ENCODE measurements at regions of chr1 and their contacts with region 1.

Region 1: DNA sequence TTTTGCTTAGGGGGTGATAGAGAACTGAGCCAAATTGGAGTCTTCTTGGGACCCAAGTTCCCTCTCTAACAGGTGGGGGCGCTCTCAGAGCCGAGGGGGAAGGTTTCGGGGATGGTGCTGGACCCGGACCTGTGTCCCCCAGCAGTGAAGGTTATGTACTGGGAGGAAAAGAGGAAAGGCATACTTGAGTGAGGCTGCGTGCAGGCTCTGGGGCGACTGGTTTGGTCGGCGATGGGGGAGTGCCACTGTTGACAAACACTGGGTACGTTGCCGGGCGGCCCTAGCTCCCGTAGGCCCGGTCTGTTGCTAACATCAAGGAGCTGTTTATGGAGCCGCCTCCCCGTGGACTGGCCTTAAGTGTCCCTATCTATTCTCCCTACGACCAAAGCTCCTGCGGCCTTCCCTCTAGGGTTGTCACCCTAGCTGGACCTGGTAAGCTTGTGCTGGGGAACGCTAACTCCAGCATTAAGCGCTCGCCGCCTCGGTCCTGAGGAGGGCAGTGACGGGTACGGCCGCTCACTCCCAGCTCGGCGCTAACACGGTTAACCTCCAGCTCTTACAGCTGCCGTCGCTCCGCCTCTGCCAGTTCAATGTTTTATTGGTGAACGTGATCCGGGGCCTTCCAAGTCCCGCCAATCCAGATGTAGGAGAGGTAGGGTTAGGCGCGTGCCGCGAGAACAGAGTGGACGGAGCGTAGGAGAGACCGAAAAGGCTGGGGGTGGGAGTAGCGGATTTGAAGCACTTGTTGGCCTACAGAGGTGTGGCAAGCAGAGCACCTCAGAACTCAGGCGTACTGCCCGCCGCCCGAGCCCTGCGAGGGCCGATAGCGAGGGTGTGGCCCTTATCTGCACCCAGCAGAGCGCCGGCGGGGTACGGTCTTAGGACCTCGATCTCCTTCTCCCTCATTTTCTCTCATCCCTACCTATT is at the start of gene PPOX:
- DNase-seq: peak; percentile 76 to 97 (median 92)
- ATAC-seq: peak; percentile 90 to 92
- H3K4me3 Mint-ChIP-seq: peak within 1 kb of the TSS; percentile 86 to 97 (median 92)
- H3K27ac Mint-ChIP-seq: peak within 1 kb of the TSS; percentile 97 to 100 (median 98)
- H3K4me1 Mint-ChIP-seq: peaks cover 29 to 66% (median 63%) of the 10 kb centered on the region in 4 donors
- H3K27me3 Mint-ChIP-seq: no peaks in the 10 kb centered on the region
- polyA plus RNA-seq, gene PPOX: 12.0 to 17.8 (median 15.7) TPM

Region 2: DNA sequence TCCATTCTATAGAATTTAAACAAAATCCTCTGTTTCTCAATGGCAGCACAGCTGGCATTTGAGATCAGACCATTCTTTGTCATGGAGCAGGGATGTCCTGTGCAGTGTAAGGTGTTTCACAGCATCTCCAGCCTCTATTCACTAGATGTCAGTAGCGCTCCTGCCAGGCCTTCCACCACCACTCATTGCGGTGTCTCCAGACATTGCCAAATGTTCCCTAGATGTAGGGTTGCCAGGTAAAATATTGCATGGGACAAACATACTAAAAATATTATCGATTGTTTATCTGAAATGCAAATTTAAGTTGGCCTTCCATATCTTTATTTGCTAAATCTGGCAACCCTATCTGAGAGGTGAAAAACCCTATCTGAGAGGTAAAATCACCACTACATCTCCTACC is 223.1 kb before region 1 on chr1:
- POLR2A ChIA-PET with region 1: no interaction called
- DNase-seq: no peak
- ATAC-seq: no peak
- H3K4me3 Mint-ChIP-seq: no peak overlapping the region
- H3K27ac Mint-ChIP-seq: no peak overlapping the region
- H3K4me1 Mint-ChIP-seq: no peaks in the 10 kb centered on the region
- H3K27me3 Mint-ChIP-seq: peaks cover 0 to 1% (median 0%) of the 10 kb centered on the region in 5 donors

Region 3: GRCh38 chr1:161153679-161154426 is 12.2 kb before region 1 on chr1 and contains the start of gene UFC1:
- POLR2A ChIA-PET with region 1: interaction called, 73 read pairs
- DNase-seq: peak; percentile 65 to 93 (median 84)
- ATAC-seq: peak; percentile 91 to 94
- H3K4me3 Mint-ChIP-seq: peak within 1 kb of the TSS; percentile 91 to 100 (median 98)
- H3K27ac Mint-ChIP-seq: peak within 1 kb of the TSS; percentile 99 to 100 (median 100)
- H3K4me1 Mint-ChIP-seq: peaks cover 15 to 39% (median 31%) of the 10 kb centered on the region in 4 donors
- H3K27me3 Mint-ChIP-seq: peaks cover 0 to 1% (median 0%) of the 10 kb centered on the region in 5 donors
- polyA plus RNA-seq, gene UFC1: 148 to 158 (median 155) TPM

Region 4: GRCh38 chr1:161177112-161177935 is 11.3 kb after region 1 on chr1 and contains the start of gene B4GALT3:
- POLR2A ChIA-PET with region 1: interaction called, 154 read pairs
- DNase-seq: peak; percentile 85 to 98 (median 93)
- ATAC-seq: peak; percentile 87 to 92
- H3K4me3 Mint-ChIP-seq: peak within 1 kb of the TSS; percentile 93 to 100 (median 99)
- H3K27ac Mint-ChIP-seq: peak within 1 kb of the TSS; percentile 97 to 100 (median 98)
- H3K4me1 Mint-ChIP-seq: peaks cover 40 to 89% (median 78%) of the 10 kb centered on the region in 4 donors
- H3K27me3 Mint-ChIP-seq: no peaks in the 10 kb centered on the region
- polyA plus RNA-seq, gene B4GALT3: 35.4 to 49.9 (median 37.6) TPM

Region 5: GRCh38 chr1:161185282-161185682 is 19.3 kb after region 1 on chr1:
- POLR2A ChIA-PET with region 1: interaction called, 154 read pairs
- DNase-seq: peak; percentile 50 to 92 (median 83)
- ATAC-seq: peak; percentile 72 to 89
- H3K4me3 Mint-ChIP-seq: peak overlapping the region; percentile 74 to 91 (median 88)
- H3K27ac Mint-ChIP-seq: peak overlapping the region; percentile 89 to 100 (median 94)
- H3K4me1 Mint-ChIP-seq: peaks cover 44 to 88% (median 82%) of the 10 kb centered on the region in 4 donors
- H3K27me3 Mint-ChIP-seq: no peaks in the 10 kb centered on the region

Region 6: GRCh38 chr1:161192476-161193465 is 26.8 kb after region 1 on chr1:
- POLR2A ChIA-PET with region 1: interaction called, 48 read pairs
- DNase-seq: peak; percentile 38 to 86 (median 66)
- ATAC-seq: peak; percentile 97
- H3K4me3 Mint-ChIP-seq: peak overlapping the region in 6 of 10 donors; percentile 44 to 68 (median 54)
- H3K27ac Mint-ChIP-seq: peak overlapping the region; percentile 67 to 97 (median 91)
- H3K4me1 Mint-ChIP-seq: peaks cover 10 to 64% (median 47%) of the 10 kb centered on the region in 4 donors
- H3K27me3 Mint-ChIP-seq: no peaks in the 10 kb centered on the region

Measured in naive thymus-derived CD8-positive, alpha-beta T cell (primary cell).